ENCODE measurements at regions of chr1 and their contacts with region 1.

Region 1: DNA sequence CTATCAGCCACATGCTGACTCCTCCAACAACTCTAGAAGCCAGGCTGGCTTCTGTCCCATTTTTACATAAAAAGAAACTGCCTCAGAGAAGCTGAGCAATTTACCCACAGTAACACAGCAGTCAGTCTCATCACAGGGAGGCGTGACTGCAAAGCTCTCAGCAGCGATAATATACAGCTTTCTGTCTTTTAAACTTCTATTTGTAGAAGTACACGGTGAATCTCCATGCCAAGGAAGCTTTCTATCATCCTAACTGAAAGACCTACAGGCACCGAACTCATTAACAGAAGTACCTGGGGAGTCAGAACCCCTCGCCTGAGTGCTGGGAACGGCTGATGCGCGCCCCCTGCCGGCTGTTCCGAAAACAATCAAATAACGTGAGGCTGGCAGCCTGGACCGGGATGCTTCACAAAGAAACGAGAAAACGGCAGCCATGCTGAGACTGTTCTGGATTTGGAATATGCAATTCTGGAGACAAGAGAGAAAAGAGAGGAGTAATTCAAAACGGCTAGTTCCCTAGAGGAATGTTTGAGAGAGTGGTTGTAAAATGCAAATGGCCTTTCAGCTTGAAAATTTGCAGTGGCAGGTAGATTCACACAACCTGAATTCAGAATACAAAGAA is 43.5 kb upstream of the RAB4A start:
- DNase-seq: peak; percentile 94
- H3K4me3 Mint-ChIP-seq: no peak overlapping the region
- H3K27ac Mint-ChIP-seq: no peak overlapping the region
- H3K4me1 Mint-ChIP-seq: peaks cover 10% of the 10 kb centered on the region
- H3K27me3 Mint-ChIP-seq: peaks cover 27% of the 10 kb centered on the region

Region 2: DNA sequence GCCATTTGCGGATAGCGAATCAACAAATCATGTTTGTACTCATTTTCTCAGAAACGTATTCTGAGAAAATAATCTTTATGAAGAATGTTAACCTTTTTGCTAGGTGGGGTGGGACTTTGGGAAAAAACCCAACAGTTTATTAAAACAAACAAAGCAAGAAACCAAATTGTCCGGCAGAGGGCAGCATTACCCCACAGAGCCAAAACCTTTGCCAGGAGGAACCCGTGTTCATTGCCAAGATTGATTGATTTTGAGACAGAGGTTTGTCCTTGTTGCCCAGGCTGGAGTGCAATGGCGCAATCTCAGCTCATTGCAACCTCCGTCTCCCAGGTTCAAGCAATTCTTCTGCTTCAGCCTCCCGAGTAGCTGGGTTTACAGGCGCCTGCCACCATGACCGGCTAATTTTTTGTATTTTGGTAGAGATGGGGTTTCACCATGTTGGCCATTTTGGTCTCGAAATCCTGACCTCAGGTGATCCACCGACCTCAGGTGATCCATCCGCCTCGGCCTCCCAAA is 563.0 kb before region 1 on chr1:
- intact Hi-C with region 1: loop called (anchors 1 kb)
- DNase-seq: peak; percentile 92
- H3K4me3 Mint-ChIP-seq: no peak overlapping the region
- H3K27ac Mint-ChIP-seq: no peak overlapping the region
- H3K4me1 Mint-ChIP-seq: peaks cover 3% of the 10 kb centered on the region
- H3K27me3 Mint-ChIP-seq: peaks cover 27% of the 10 kb centered on the region

Region 3: GRCh38 chr1:228691926-228692325 is 535.5 kb before region 1 on chr1:
- intact Hi-C with region 1: loop called (anchors 1 kb)
- DNase-seq: peak; percentile 73
- H3K4me3 Mint-ChIP-seq: no peak overlapping the region
- H3K27ac Mint-ChIP-seq: no peak overlapping the region
- H3K4me1 Mint-ChIP-seq: peaks cover 3% of the 10 kb centered on the region
- H3K27me3 Mint-ChIP-seq: peaks cover 21% of the 10 kb centered on the region

Region 4: GRCh38 chr1:228734881-228735801 is 492.3 kb before region 1 on chr1 and contains the start of gene RHOU:
- intact Hi-C with region 1: loop called (anchors 1 kb)
- DNase-seq: peak; percentile 93
- H3K4me3 Mint-ChIP-seq: peak within 1 kb of the TSS; percentile 81
- H3K27ac Mint-ChIP-seq: peak within 1 kb of the TSS; percentile 36
- H3K4me1 Mint-ChIP-seq: peaks cover 6% of the 10 kb centered on the region
- H3K27me3 Mint-ChIP-seq: peaks cover 35% of the 10 kb centered on the region
- total RNA-seq, gene RHOU: 0.51 and 0.69 TPM in 2 replicates

Region 5: GRCh38 chr1:229203030-229203751 is 24.2 kb before region 1 on chr1:
- intact Hi-C with region 1: no loop called
- DNase-seq: no peak
- H3K4me3 Mint-ChIP-seq: no peak overlapping the region
- H3K27ac Mint-ChIP-seq: no peak overlapping the region
- H3K4me1 Mint-ChIP-seq: peaks cover 17% of the 10 kb centered on the region
- H3K27me3 Mint-ChIP-seq: peaks cover 13% of the 10 kb centered on the region

Measured in activated CD4-positive, alpha-beta T cell treated with anti-CD3 and anti-CD28 coated beads, Interleukin-2, amount 10 ng/mL, durations not matched to agents 24 days and 14 days (primary cell).